Posterior vena cava (tissue), 2 donors: ENCODE measurements at regions of chr22 and their contacts with region 1.

Region 1: DNA sequence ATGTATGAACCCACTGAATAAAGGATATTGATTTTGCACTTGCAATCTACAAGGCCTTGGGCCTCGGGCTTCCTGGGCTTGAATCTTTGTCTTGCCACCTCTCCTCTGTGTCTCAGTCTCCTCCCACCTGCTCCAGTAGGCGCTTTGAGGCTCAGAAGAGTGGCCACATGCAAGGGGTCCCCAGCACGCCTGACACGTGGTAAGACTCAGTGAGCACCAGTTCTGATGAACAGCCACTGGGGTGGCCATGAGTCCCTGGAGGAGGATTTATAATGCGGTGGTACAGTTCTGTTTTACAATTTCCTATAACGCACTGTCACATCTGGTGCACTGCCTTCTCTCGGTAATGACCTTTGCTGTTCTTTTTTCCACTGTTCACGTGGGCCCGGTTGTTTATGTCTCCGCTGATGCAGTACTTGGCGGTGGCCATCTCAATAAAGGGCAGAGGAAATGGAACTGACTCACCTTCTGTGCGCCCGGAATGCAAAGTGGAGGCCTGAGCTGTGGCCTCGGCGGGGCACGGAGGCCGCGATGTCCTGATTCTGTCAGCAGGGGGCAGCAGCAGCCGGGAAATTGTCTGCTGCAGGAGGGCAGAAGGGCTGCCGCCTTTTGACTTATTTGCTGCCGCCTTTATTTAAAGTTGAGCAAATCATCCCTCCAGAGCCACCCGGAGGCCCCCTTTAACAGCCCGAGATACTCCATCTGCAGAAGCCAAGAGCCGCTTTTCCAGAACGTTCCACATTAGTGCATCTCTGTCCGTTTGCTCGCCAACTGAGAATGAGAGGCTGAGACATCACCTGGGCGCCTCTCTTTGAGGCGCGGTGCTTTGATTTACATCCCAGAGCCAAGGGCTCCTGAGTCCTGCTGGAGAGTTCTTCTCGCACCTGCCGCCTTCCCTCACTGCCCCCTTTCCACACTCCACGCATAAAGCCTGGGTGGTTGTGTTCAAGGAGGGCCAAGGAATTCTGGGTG is 6.0 kb upstream of the IFT27 start:
- DNase-seq: peak; percentile 94

Region 2: DNA sequence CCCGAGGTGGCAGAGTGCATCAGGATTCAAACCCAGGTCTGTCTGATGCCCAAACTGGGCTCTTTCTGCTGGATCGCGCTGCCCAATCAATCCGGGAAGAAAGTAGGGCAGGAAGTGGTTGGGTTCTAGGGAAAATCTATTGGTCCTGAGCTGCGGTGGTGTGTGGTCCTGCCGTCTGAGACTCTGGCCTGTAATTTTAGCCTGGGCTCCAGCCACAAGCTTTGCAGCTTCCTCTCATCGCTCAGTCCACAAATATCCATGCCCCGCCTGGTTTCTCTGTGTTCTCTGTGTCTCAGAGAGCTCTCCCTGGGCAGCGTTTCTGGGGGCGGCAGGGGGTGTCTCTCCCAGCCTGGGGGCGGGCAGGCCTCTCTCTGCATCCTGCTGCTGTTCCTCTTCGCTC is 97.1 kb before region 1 on chr22:
- intact Hi-C with region 1: no loop called
- DNase-seq: no peak

Region 3: DNA sequence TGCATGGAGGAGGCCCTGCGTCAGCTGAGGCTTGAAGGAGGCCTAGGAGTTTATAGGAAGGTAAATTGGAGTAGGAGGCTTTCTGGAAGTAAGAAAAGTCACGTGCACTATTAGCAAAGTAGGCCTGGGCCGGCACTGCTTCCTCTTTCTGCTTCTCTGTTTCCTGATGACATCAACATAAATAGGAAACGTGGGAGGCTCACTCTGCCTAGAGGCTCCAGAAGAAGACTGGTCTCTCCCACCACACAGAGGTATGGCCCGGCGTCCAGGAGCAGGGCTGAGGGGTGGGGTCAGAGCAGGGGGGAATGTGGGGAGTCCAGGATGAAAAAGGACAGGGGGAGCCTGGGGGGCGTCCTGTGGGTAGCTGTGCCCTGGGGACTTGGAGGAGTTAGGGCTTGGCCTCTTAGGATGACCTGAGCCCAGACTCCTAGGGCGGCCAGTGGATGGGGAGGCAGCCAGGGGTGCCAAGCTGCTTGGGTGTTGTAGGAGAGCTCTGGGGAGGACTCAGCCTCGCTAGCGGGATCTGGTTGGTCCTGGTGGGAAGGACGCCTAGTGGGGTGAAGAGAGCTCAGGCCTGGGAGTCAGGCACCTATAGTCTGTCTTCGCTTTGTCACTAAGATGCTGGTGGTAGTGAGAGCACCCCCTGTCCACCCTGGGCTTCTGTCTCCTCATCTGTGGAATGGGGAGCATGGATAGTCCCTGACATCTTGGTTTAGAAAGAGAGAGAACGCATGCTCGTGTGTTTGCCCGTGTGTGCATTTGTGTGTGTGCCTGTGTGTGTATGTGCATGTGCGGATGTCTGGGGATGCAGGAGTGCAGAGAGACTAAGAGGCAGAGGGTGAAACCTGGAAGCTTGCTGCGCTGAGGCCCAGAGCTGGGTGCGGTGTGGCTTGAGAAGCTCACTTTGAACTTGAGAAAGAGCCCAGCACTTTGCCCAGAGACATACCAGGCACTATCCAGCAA is 131.8 kb after region 1 on chr22 and contains the start of gene CSF2RB:
- intact Hi-C with region 1: no loop called
- DNase-seq: no peak
- total RNA-seq, gene CSF2RB: 7.7 to 10.5 TPM

Region 4: DNA sequence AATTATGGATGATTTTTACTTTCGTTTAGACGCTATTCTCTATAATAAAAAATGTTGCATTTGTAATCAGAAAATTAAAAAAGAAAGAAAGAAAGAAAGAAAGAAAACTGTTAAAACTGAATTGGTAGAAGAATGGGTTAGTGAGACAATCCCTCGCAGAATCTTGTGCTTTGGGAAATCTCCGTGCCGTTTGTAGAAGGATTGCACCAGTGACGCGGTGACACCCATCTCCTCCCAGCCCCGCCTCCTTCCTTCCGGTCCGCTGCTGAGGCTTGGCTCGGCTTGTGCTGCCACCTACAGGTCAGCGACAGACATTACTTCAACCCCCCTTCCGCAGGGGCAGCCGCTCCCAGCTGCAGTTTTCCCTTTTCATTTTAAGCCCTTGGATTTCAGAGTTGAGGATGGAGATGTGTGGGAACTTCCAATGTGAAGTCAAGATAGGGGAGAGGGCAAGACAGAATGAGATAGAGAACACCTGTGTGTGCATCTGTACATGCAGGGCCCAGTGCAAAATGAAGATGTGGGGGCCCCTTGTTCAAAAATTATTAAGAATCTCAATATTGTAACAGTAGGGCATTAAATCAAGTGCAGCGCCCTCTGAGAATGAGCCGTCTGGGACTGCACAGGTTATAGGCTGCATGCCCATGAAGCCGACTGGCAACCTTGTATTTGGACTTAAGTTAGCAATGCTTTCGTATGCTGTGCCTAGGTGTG is 196.2 kb after region 1 on chr22:
- intact Hi-C with region 1: loop called in 1 of 2 experiments (anchors 5 kb)
- DNase-seq: peak; percentile 97